Thyroid gland (tissue), 4 donors: ENCODE measurements at regions of chr4 and their contacts with region 1.

Region 1: GRCh38 chr4:127965062-127965802 is at the starts of genes ABHD18 and MFSD8:
- DNase-seq: peak; percentile 99 to 100
- H3K4me3 ChIP-seq: peak within 1 kb of the TSS; percentile 91 to 95 (median 91)
- H3K27ac ChIP-seq: peak within 1 kb of the TSS; percentile 81 to 96 (median 87)
- H3K4me1 ChIP-seq: peaks cover 3 to 5% of the 10 kb centered on the region in 2 donors
- H3K27me3 ChIP-seq: no peaks in the 10 kb centered on the region
- CTCF ChIP-seq: peak in 5 of 6 experiments; percentile 27 to 57 (median 49)
- POLR2A ChIP-seq: peak in 1 of 2 donors; percentile 91
- total RNA-seq, gene ABHD18: 14.6 to 28.2 (median 18.5) TPM
- total RNA-seq, gene MFSD8: 32.5 to 80.9 (median 54.0) TPM

Region 2: GRCh38 chr4:128056796-128057195 is 91.6 kb after region 1 on chr4:
- intact Hi-C with region 1: loop called (anchors 10 kb)
- DNase-seq: no peak
- H3K4me3 ChIP-seq: no peak overlapping the region
- H3K27ac ChIP-seq: no peak overlapping the region
- H3K4me1 ChIP-seq: no peaks in the 10 kb centered on the region
- H3K27me3 ChIP-seq: no peaks in the 10 kb centered on the region
- CTCF ChIP-seq: no peak
- POLR2A ChIP-seq: no peak

Region 3: GRCh38 chr4:128354205-128354821 is 389.1 kb after region 1 on chr4:
- intact Hi-C with region 1: no loop called
- DNase-seq: peak; percentile 93 to 94
- H3K4me3 ChIP-seq: no peak overlapping the region
- H3K27ac ChIP-seq: peak overlapping the region; percentile 86 to 93 (median 86)
- H3K4me1 ChIP-seq: peaks cover 48 to 65% of the 10 kb centered on the region in 2 donors
- H3K27me3 ChIP-seq: no peaks in the 10 kb centered on the region
- CTCF ChIP-seq: no peak
- POLR2A ChIP-seq: no peak